ENCODE measurements at regions of chr17 and their contacts with region 1.

Region 1: DNA sequence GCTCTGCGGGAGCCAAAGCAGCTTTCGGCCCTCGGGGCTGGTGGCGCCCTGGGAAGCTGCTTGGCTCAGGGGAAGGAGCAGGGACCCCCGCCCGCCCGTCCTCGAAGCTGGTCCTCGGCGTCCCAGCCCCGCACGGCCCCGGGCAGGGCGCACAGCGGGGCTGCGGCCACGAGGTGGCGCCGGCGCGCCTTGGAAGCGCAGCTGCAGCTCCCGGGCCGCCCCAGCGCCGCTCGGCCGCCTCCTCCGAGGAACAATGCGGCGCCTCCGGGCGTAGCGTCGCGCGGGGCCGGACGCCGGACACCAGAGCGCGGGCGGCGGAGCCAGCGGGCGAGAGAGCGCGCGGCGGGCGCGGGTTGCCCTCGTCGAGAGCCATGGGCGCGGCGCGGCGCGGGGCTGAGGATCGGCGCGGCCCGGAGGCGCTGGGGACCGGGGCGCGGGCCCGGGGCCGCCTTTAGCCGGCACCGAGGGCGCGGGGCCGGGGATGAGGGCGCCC is at the start of gene MGAT5B:
- DNase-seq: peak; percentile 73
- H3K4me3 Mint-ChIP-seq: peak within 1 kb of the TSS; percentile 59
- H3K27ac Mint-ChIP-seq: no peak within 1 kb of the TSS
- H3K4me1 Mint-ChIP-seq: peaks cover 7% of the 10 kb centered on the region
- H3K27me3 Mint-ChIP-seq: peaks cover 21% of the 10 kb centered on the region
- total RNA-seq, gene MGAT5B: 0.19 TPM in 1 of 2 experiments, not detected in the other

Region 2: GRCh38 chr17:77068915-77069314 is 200.7 kb after region 1 on chr17:
- CTCF ChIA-PET with region 1: interaction called, 20 read pairs
- intact Hi-C with region 1: no loop called
- DNase-seq: no peak
- H3K4me3 Mint-ChIP-seq: no peak overlapping the region
- H3K27ac Mint-ChIP-seq: no peak overlapping the region
- H3K4me1 Mint-ChIP-seq: peaks cover 1% of the 10 kb centered on the region
- H3K27me3 Mint-ChIP-seq: peaks cover 20% of the 10 kb centered on the region

Measured in activated naive CD4-positive, alpha-beta T cell treated with anti-CD3 and anti-CD28 coated beads for 36 hours (primary cell).